Activated CD4-positive, alpha-beta T cell treated with anti-CD3 and anti-CD28 coated beads for 36 hours (primary cell): ENCODE measurements at regions of chr19 and their contacts with region 1.

Region 1: DNA sequence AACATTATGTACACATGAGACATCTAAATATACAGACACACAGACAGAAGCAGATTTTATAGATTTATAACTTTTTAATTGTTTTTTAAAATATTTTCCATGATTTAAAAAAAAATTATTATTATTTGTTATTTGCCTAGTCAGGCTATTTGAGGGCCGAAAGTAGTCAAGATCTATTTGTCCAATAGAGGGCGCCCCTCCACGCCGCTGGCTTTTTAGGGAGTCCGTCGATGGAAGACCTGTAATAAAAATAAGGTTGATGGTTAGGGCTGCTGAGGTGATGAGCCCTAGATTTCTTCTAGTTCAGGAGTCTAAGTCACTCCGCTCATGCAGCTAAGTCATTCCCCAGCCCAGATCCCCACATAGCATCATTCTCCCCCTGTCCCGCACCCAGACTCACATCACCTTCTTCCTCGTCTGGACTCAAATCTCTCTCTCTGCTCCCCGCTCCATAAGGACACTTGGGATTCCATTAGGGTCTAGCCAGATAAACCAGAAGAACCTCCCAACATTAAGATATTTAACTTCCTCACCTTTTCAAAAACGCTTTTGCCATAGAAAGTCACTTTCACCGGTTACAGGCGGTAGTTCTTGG is 33.9 kb upstream of the CEACAM21 start:
- DNase-seq: peak; percentile 87
- ATAC-seq: peak; percentile 5
- H3K4me3 Mint-ChIP-seq: peak overlapping the region; percentile 7
- H3K27ac Mint-ChIP-seq: peak overlapping the region; percentile 90
- H3K4me1 Mint-ChIP-seq: peaks cover 59% of the 10 kb centered on the region
- H3K27me3 Mint-ChIP-seq: no peaks in the 10 kb centered on the region

Region 2: GRCh38 chr19:41449079-41449864 is 92.8 kb before region 1 on chr19:
- CTCF ChIA-PET with region 1: interaction called, 12 read pairs
- POLR2A ChIA-PET with region 1: no interaction called
- intact Hi-C with region 1: loop called (anchors 1 kb)
- DNase-seq: peak; percentile 85
- ATAC-seq: peak; percentile 93
- H3K4me3 Mint-ChIP-seq: peak overlapping the region; percentile 70
- H3K27ac Mint-ChIP-seq: no peak overlapping the region
- H3K4me1 Mint-ChIP-seq: peaks cover 11% of the 10 kb centered on the region
- H3K27me3 Mint-ChIP-seq: peaks cover 12% of the 10 kb centered on the region

Region 3: GRCh38 chr19:41521931-41522555 is 20.0 kb before region 1 on chr19:
- CTCF ChIA-PET with region 1: interaction called, 3 read pairs
- POLR2A ChIA-PET with region 1: no interaction called
- intact Hi-C with region 1: loop called in 1 of 2 experiments (anchors 2 kb)
- DNase-seq: peak; percentile 64
- ATAC-seq: peak; percentile 51
- H3K4me3 Mint-ChIP-seq: peak overlapping the region; percentile 66
- H3K27ac Mint-ChIP-seq: peak overlapping the region; percentile 89
- H3K4me1 Mint-ChIP-seq: peaks cover 20% of the 10 kb centered on the region
- H3K27me3 Mint-ChIP-seq: peaks cover 14% of the 10 kb centered on the region

Region 4: GRCh38 chr19:41554907-41555306 is 12.8 kb after region 1 on chr19:
- CTCF ChIA-PET with region 1: interaction called, 450 read pairs
- POLR2A ChIA-PET with region 1: interaction called, 7 read pairs
- intact Hi-C with region 1: loop called in 1 of 2 experiments (anchors 1 kb)
- DNase-seq: peak; percentile 43
- ATAC-seq: peak; percentile 37
- H3K4me3 Mint-ChIP-seq: peak overlapping the region; percentile 42
- H3K27ac Mint-ChIP-seq: peak overlapping the region; percentile 94
- H3K4me1 Mint-ChIP-seq: peaks cover 74% of the 10 kb centered on the region
- H3K27me3 Mint-ChIP-seq: no peaks in the 10 kb centered on the region

Region 5: GRCh38 chr19:41570639-41571112 is 28.6 kb after region 1 on chr19:
- CTCF ChIA-PET with region 1: interaction called, 450 read pairs
- POLR2A ChIA-PET with region 1: no interaction called
- intact Hi-C with region 1: no loop called
- DNase-seq: peak; percentile 92
- ATAC-seq: peak; percentile 97
- H3K4me3 Mint-ChIP-seq: no peak overlapping the region
- H3K27ac Mint-ChIP-seq: no peak overlapping the region
- H3K4me1 Mint-ChIP-seq: peaks cover 28% of the 10 kb centered on the region
- H3K27me3 Mint-ChIP-seq: no peaks in the 10 kb centered on the region

Region 6: GRCh38 chr19:41945135-41945766 is 403.2 kb after region 1 on chr19:
- CTCF ChIA-PET with region 1: no interaction called
- POLR2A ChIA-PET with region 1: no interaction called
- intact Hi-C with region 1: loop called in 1 of 2 experiments (anchors 10 kb)
- DNase-seq: peak; percentile 95
- ATAC-seq: peak; percentile 92
- H3K4me3 Mint-ChIP-seq: peak overlapping the region; percentile 41
- H3K27ac Mint-ChIP-seq: peak overlapping the region; percentile 96
- H3K4me1 Mint-ChIP-seq: peaks cover 50% of the 10 kb centered on the region
- H3K27me3 Mint-ChIP-seq: peaks cover 4% of the 10 kb centered on the region